ENCODE measurements at regions of chr20 and their contacts with region 1.

Region 1: DNA sequence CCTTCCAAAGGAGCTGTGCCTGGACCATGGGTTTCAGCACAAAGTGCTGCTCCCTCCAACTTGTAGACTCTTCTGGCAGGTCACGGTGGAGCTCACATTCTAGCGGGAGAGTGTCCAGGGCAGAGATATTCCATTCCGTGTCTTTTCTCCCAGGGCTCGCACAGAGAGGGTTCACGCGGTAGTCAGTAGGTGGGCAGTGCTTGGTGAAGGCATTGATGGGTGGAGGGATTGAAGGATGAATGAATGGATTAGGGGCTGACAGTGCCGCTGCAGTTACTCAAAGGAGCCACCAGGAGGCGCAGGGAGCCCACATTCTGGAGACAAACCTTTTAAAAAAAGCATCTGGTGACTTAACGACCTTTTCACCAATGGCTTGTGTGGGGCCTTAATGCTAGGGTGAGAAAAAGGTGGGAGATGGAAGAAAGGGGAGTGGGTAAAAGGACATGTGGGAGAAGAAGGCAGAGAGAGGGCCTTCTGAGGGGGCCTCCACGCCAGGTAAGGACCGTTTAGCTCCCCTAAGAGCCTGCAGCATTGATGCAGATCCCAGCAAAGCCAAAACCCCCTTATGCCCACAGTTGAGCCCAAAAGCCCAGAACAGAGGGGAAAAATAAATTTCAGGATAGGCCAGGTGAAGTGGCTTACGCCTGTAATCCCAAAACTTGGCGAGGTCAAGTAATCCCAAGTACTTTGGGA is 17.5 kb upstream of the FAM110A start:
- DNase-seq: peak; percentile 70
- ATAC-seq: peak; percentile 59

Region 2: DNA sequence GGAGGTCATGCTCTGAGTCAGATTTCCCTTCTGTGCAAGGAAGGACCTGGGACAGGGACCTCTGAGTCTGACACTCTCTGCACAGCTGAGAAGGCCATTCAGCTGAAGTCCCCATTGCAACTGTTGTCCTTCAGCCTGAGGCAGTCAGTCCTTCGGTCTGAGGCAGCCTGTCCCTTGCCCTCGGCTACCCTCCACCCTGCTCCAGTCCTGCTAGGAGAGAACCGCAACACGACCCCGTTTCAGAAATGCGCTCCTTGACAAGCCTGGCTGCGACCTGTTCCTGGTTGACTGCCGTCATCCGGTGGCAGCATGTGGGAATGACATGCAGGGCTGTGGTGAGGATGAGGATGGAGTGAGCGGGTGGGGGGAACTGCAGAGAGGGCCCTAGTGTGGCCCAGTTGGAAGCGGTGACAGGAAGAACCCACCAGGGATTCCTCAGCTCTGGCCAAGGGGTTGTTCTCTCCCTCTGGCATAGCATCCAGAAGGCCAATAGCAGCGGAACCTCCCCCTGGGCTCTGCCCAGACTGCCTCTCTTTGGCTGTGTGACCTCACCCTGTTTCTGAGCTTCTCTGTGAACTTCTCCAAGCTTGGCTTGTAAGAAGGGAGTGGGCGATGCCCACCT is 140.4 kb after region 1 on chr20:
- intact Hi-C with region 1: loop called (anchors 2 kb)
- DNase-seq: peak; percentile 79
- ATAC-seq: peak; percentile 87

Region 3: GRCh38 chr20:1212607-1213396 is 396.7 kb after region 1 on chr20:
- intact Hi-C with region 1: loop called (anchors 10 kb)
- DNase-seq: peak; percentile 65
- ATAC-seq: peak; percentile 89

Measured in left ventricle myocardium superior (tissue), 1 donor.